HCT116 (cell line): ENCODE measurements at regions of chr12 and their contacts with region 1.

Region 1: DNA sequence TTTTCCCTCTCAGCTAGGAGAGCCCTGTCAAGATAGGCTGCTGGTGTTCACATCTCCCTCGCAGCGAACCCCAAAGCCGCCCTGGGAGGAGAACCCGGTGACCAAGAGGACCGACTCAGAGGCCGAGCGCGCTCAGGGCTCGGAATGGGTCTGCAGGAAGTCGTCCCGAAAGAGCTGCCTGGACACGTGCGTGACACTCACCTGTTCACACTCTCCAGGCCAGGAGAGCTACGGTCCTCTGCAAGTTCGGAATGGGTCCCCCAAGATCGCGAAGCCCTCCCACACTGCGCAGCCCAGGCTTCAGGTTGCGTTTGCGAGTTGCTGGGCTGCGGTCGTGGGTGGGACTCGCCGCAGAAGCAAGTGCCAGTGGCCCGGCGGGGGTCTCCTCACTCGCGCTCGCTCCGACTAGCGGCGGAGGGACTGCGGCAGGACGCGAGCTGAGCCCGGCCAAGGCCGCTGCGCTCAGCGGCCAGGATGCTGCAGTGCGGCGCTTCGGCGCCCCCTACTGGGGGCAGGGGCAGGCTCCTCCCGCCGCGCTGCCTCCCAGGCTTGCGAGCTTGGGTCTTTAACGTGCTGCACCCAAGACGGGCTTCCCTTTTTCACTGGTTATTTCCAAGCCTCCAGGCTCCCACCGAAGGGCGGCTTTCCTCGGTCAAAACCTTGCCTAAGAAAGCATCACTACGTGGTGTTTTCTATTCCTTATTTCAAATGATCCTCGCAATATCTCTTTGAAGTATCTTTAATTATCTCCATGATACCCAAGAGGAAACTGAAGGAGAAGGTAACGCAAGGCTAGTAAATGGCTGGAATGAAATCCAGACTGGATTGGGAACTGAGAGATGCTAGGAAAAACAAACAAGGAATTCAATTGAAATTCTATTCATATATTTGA is at the start of gene RERG:
- DNase-seq: peak; percentile 36
- ATAC-seq: peak; percentile 100
- H3K4me3 ChIP-seq: peak within 1 kb of the TSS; percentile 4 to 13; a peak in 1 of 4 replicates
- H3K27ac ChIP-seq: no peak within 1 kb of the TSS; the same call in 1 of the 2 replicates
- H3K4me1 ChIP-seq: peaks cover 0 to 4% of the 10 kb centered on the region in 2 experiments; a peak in 1 of 4 replicates
- H3K27me3 ChIP-seq: peaks cover 31% of the 10 kb centered on the region
- CTCF ChIP-seq: peak; percentile 53 to 91 (median 77)
- POLR2A ChIP-seq: no peak
- RAD21 ChIP-seq: peak; percentile 68
- total RNA-seq, gene RERG: not detected

Region 2: GRCh38 chr12:14845350-14845750 is 375.9 kb before region 1 on chr12:
- CTCF ChIA-PET with region 1: interaction called, 3 read pairs
- POLR2A ChIA-PET with region 1: no interaction called
- RAD21 ChIA-PET with region 1: no interaction called
- intact Hi-C with region 1: loop called (anchors 10 kb)
- DNase-seq: peak; percentile 37
- ATAC-seq: peak; percentile 87
- H3K4me3 ChIP-seq: no peak overlapping the region
- H3K27ac ChIP-seq: no peak overlapping the region
- H3K4me1 ChIP-seq: peaks cover 0 to 10% of the 10 kb centered on the region in 2 experiments; a peak in 2 of 4 replicates
- H3K27me3 ChIP-seq: no peaks in the 10 kb centered on the region
- CTCF ChIP-seq: peak; percentile 67 to 86 (median 84)
- POLR2A ChIP-seq: no peak
- RAD21 ChIP-seq: peak; percentile 87

Region 3: DNA sequence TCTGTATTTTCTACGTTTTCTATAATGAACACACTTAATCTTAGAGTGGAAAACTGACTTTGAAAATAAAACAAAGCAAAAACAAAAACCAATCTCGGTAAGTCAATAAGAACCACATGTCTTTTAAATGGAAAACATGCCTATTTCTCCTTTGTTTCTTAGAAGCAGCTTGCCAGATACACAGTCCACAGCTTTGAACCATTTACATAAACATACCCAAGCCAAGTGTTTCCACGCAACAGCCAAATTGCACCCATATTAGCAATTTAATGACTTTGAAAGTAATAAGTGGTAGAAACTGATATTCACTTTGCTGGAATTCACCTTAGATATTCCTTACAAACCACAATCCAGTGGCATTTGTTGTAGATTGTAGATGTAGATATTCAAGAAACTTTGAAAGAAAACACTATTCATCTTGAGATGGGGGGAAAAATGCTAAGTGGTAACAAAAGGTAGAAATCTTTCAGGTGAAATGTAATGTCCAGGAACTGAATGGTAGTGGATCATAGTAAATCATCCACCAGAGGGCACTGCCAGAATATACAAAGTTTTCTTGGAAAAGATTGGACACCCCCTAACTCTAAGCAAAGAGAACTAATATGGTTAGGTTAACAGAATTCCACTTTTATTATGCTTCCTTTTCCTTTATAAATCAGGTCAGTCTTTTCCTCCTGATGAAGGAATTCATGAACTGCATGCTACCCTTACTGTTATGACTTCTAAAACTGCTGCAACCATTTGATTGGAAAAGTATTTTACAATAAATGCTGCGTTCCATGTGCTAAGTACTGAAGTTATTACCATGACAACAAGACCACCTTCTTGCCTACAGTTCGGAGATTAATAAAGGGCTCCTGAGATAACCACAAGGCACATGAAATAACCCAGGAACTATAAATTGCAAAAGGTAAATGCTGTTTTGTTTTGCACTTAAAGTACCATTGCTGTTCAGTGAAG is 69.8 kb before region 1 on chr12:
- CTCF ChIA-PET with region 1: interaction called, 10 read pairs
- POLR2A ChIA-PET with region 1: no interaction called
- RAD21 ChIA-PET with region 1: no interaction called
- intact Hi-C with region 1: loop called (anchors 2 kb)
- DNase-seq: peak; percentile 6
- ATAC-seq: 0 out of 2 replicates have a peak, but pooled peaks have one; percentile 46
- H3K4me3 ChIP-seq: no peak overlapping the region
- H3K27ac ChIP-seq: no peak overlapping the region
- H3K4me1 ChIP-seq: no peaks in the 10 kb centered on the region
- H3K27me3 ChIP-seq: peaks cover 69% of the 10 kb centered on the region
- CTCF ChIP-seq: peak; percentile 34 to 62 (median 46); a peak in 3 of 6 replicates
- POLR2A ChIP-seq: no peak
- RAD21 ChIP-seq: peak; percentile 51

Region 4: GRCh38 chr12:15183813-15184212 is 37.4 kb before region 1 on chr12:
- CTCF ChIA-PET with region 1: interaction called, 12 read pairs
- POLR2A ChIA-PET with region 1: no interaction called
- RAD21 ChIA-PET with region 1: no interaction called
- intact Hi-C with region 1: no loop called
- DNase-seq: no peak
- ATAC-seq: no peak
- H3K4me3 ChIP-seq: no peak overlapping the region
- H3K27ac ChIP-seq: no peak overlapping the region
- H3K4me1 ChIP-seq: no peaks in the 10 kb centered on the region
- H3K27me3 ChIP-seq: peaks cover 20% of the 10 kb centered on the region
- CTCF ChIP-seq: no peak
- POLR2A ChIP-seq: no peak
- RAD21 ChIP-seq: no peak

Region 5: GRCh38 chr12:15404485-15404884 is 183.2 kb after region 1 on chr12:
- CTCF ChIA-PET with region 1: no interaction called
- POLR2A ChIA-PET with region 1: no interaction called
- RAD21 ChIA-PET with region 1: no interaction called
- intact Hi-C with region 1: no loop called
- DNase-seq: no peak
- ATAC-seq: no peak
- H3K4me3 ChIP-seq: no peak overlapping the region
- H3K27ac ChIP-seq: no peak overlapping the region
- H3K4me1 ChIP-seq: no peaks in the 10 kb centered on the region
- H3K27me3 ChIP-seq: peaks cover 19% of the 10 kb centered on the region; the same call in 1 of the 2 replicates
- CTCF ChIP-seq: no peak
- POLR2A ChIP-seq: no peak
- RAD21 ChIP-seq: no peak